ENCODE measurements at regions of chr19 and their contacts with region 1.

Region 1: GRCh38 chr19:12085074-12085805 is 20.7 kb downstream of the ZNF844 start:
- DNase-seq: no peak
- ATAC-seq: no peak
- H3K4me3 Mint-ChIP-seq: no peak overlapping the region
- H3K27ac Mint-ChIP-seq: no peak overlapping the region
- H3K4me1 Mint-ChIP-seq: no peaks in the 10 kb centered on the region
- H3K27me3 Mint-ChIP-seq: no peaks in the 10 kb centered on the region
- CTCF ChIP-seq: no peak

Region 2: DNA sequence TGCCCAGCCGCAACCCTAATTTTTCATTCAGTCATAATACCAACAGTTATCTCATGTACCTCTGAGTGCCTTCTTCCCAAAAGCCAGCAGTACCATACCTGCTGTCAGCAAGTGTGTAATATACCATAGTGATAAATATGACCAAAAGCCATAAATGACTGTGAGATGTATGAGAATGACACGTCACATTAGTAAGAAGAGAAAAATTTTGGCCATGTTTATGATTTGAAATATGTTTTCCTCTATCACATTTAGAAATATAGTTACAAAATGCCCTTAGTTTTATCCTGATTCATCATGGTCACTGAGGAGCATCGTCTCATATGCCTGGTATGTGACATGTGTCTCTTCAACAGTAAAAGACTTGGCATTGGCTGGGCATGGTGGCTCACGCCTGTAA is 171.6 kb before region 1 on chr19:
- CTCF ChIA-PET with region 1: no interaction called
- POLR2A ChIA-PET with region 1: interaction called, 10 read pairs
- intact Hi-C with region 1: no loop called
- DNase-seq: no peak
- ATAC-seq: no peak
- H3K4me3 Mint-ChIP-seq: no peak overlapping the region
- H3K27ac Mint-ChIP-seq: no peak overlapping the region
- H3K4me1 Mint-ChIP-seq: no peaks in the 10 kb centered on the region
- H3K27me3 Mint-ChIP-seq: no peaks in the 10 kb centered on the region
- CTCF ChIP-seq: no peak

Region 3: GRCh38 chr19:13117772-13118423 is 1032.7 kb after region 1 on chr19 and contains the start of gene NACC1:
- CTCF ChIA-PET with region 1: no interaction called
- POLR2A ChIA-PET with region 1: no interaction called
- intact Hi-C with region 1: no loop called
- DNase-seq: peak; percentile 94
- ATAC-seq: peak; percentile 81
- H3K4me3 Mint-ChIP-seq: peak within 1 kb of the TSS; percentile 99
- H3K27ac Mint-ChIP-seq: peak within 1 kb of the TSS; percentile 96
- H3K4me1 Mint-ChIP-seq: peaks cover 64% of the 10 kb centered on the region
- H3K27me3 Mint-ChIP-seq: no peaks in the 10 kb centered on the region
- CTCF ChIP-seq: no peak
- total RNA-seq, gene NACC1: 62.1 and 68.8 TPM in 2 replicates

Measured in activated B cell treated with CpG ODN at 0.5 μM for 24 hours (primary cell).